Activated B cell treated with CpG ODN at 0.5 μM for 24 hours (primary cell): ENCODE measurements at regions of chr1 and their contacts with region 1.

Region 1: DNA sequence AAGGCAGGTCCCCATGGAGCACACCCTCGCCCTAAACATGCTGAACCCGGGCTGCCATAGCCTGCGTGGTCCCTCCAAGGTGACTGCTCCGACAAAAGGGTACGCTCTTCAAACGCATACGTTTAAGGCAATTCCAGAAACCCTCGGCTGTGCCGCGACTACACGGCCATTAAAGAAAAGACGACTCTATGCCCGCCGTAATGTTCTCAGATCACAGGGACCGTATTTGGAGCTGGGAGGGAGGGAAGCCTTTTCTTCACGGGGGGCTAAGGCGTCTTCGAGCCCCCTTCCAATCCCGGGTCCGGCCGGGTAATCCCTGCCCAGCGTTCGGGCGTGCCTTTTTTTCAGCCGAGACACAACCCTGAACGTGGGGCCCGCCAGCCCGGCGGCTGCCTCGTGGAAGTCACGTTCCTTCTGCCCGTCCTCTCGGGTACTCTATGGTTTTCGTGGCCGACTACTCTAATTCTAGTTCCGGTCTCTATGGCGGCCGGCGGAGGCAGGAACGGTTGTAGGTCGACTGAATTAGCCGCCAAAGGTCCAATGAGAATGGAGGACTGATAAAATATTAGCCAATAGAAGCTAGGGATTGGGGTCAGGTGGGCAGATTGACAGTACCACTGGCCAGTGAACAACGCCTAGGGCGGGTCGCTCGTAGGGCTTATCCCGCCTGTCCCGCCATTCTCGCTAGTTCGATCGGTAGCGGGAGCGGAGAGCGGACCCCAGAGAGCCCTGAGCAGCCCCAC is at the start of gene YBX1:
- DNase-seq: peak; percentile 88
- ATAC-seq: peak; percentile 88
- H3K4me3 Mint-ChIP-seq: peak within 1 kb of the TSS; percentile 97
- H3K27ac Mint-ChIP-seq: peak within 1 kb of the TSS; percentile 97
- H3K4me1 Mint-ChIP-seq: peaks cover 57% of the 10 kb centered on the region
- H3K27me3 Mint-ChIP-seq: no peaks in the 10 kb centered on the region
- CTCF ChIP-seq: no peak
- total RNA-seq, gene YBX1: 609 and 693 TPM in 2 replicates

Region 2: GRCh38 chr1:42456010-42456758 is 225.7 kb before region 1 on chr1 and contains the starts of genes PPCS and ZMYND12:
- CTCF ChIA-PET with region 1: no interaction called
- POLR2A ChIA-PET with region 1: interaction called, 15 read pairs
- intact Hi-C with region 1: no loop called
- DNase-seq: peak; percentile 91
- ATAC-seq: peak; percentile 86
- H3K4me3 Mint-ChIP-seq: peak within 1 kb of the TSS; percentile 91
- H3K27ac Mint-ChIP-seq: peak within 1 kb of the TSS; percentile 98
- H3K4me1 Mint-ChIP-seq: peaks cover 27% of the 10 kb centered on the region
- H3K27me3 Mint-ChIP-seq: no peaks in the 10 kb centered on the region
- CTCF ChIP-seq: no peak
- total RNA-seq, gene PPCS: 63.1 and 65.3 TPM in 2 replicates
- total RNA-seq, gene ZMYND12: 0.53 and 0.56 TPM in 2 replicates

Region 3: GRCh38 chr1:42657971-42658879 is 23.7 kb before region 1 on chr1 and contains the start of gene PPIH:
- CTCF ChIA-PET with region 1: no interaction called
- POLR2A ChIA-PET with region 1: interaction called, 82 read pairs
- intact Hi-C with region 1: loop called (anchors 1 kb)
- DNase-seq: peak; percentile 87
- ATAC-seq: peak; percentile 99
- H3K4me3 Mint-ChIP-seq: peak within 1 kb of the TSS; percentile 95
- H3K27ac Mint-ChIP-seq: peak within 1 kb of the TSS; percentile 85
- H3K4me1 Mint-ChIP-seq: peaks cover 35% of the 10 kb centered on the region
- H3K27me3 Mint-ChIP-seq: no peaks in the 10 kb centered on the region
- CTCF ChIP-seq: no peak
- total RNA-seq, gene PPIH: 64.1 and 65.1 TPM in 2 replicates

Region 4: DNA sequence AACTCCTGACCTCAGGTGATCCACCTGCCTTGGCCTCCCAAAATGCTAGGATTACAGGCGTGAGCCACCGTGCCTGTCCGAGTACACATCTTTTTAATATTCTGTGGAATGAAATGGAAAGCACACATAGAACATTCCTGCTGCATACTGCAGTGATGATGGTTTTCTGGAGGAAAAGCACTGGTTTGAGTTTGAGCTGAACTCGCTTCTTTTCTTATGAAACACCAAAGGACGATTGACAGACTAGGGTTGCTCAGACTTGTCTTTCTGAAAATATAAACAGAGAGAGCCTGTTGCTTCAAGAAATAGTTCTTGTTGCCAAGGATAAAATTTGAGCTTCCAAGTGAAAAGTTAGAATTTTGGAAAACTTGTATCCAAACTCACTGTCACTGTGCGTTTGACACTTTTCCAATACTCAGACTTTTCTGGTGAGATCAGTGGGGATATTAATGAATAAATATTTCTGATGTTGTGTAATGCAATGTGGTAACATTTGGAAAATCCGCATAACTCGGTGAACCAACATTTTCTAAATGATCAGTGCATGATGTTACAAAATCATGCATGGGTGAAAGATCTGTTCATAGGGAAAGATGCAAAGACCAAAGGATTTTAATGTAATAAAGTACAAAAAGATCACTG is 120.0 kb after region 1 on chr1:
- CTCF ChIA-PET with region 1: no interaction called
- POLR2A ChIA-PET with region 1: no interaction called
- intact Hi-C with region 1: no loop called
- DNase-seq: no peak
- ATAC-seq: no peak
- H3K4me3 Mint-ChIP-seq: no peak overlapping the region
- H3K27ac Mint-ChIP-seq: no peak overlapping the region
- H3K4me1 Mint-ChIP-seq: no peaks in the 10 kb centered on the region
- H3K27me3 Mint-ChIP-seq: no peaks in the 10 kb centered on the region
- CTCF ChIP-seq: no peak

Region 5: GRCh38 chr1:42816585-42817434 is 134.9 kb after region 1 on chr1 and contains the starts of genes ERMAP and SVBP:
- CTCF ChIA-PET with region 1: no interaction called
- POLR2A ChIA-PET with region 1: interaction called, 7 read pairs
- intact Hi-C with region 1: loop called (anchors 2 kb)
- DNase-seq: peak; percentile 97
- ATAC-seq: peak; percentile 88
- H3K4me3 Mint-ChIP-seq: peak within 1 kb of the TSS; percentile 86
- H3K27ac Mint-ChIP-seq: peak within 1 kb of the TSS; percentile 86
- H3K4me1 Mint-ChIP-seq: peaks cover 20% of the 10 kb centered on the region
- H3K27me3 Mint-ChIP-seq: no peaks in the 10 kb centered on the region
- CTCF ChIP-seq: no peak
- total RNA-seq, gene ERMAP: 7.1 and 10.7 TPM in 2 replicates
- total RNA-seq, gene SVBP: 21.5 and 22.4 TPM in 2 replicates

Region 6: GRCh38 chr1:42958488-42959319 is 276.8 kb after region 1 on chr1 and contains the start of gene SLC2A1:
- CTCF ChIA-PET with region 1: no interaction called
- POLR2A ChIA-PET with region 1: interaction called, 3 read pairs
- intact Hi-C with region 1: loop called (anchors 1 kb)
- DNase-seq: peak; percentile 90
- ATAC-seq: peak; percentile 89
- H3K4me3 Mint-ChIP-seq: peak within 1 kb of the TSS; percentile 99
- H3K27ac Mint-ChIP-seq: peak within 1 kb of the TSS; percentile 99
- H3K4me1 Mint-ChIP-seq: peaks cover 77% of the 10 kb centered on the region
- H3K27me3 Mint-ChIP-seq: peaks cover 1% of the 10 kb centered on the region
- CTCF ChIP-seq: no peak
- total RNA-seq, gene SLC2A1: 105 and 117 TPM in 2 replicates